ENCODE measurements at regions of chr3 and their contacts with region 1.

Region 1: GRCh38 chr3:69865920-69866679 is 126.8 kb downstream of the MITF start:
- DNase-seq: peak in 1 of 2 donors; percentile 51
- ATAC-seq: peak; percentile 71
- H3K4me3 ChIP-seq: peak overlapping the region; percentile 21 to 59
- H3K27ac ChIP-seq: no peak overlapping the region
- H3K4me1 ChIP-seq: no peaks in the 10 kb centered on the region
- H3K27me3 ChIP-seq: no peaks in the 10 kb centered on the region

Region 2: DNA sequence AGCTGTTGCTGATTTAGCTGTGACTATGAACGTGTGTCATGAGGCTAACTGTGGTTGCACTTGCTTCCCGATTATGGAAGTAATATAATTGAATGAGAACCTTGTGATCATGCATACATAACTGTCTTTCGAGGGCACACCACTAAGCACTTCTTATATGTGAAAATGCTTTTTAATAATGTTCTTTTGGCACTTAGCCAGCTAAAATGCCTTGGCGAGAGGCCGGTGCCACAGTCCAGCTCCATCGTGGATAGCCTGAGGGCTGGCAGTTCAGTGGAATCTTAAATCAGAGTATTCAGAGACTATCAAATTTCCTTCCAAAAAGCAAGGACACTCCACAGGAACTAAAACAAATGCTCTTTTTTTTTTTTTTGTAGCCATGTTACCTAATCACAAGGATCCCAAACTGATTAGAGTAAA is 318.6 kb before region 1 on chr3:
- intact Hi-C with region 1: no loop called
- DNase-seq: no peak
- ATAC-seq: no peak
- H3K4me3 ChIP-seq: no peak overlapping the region
- H3K27ac ChIP-seq: no peak overlapping the region
- H3K4me1 ChIP-seq: no peaks in the 10 kb centered on the region
- H3K27me3 ChIP-seq: peaks cover 0 to 2% of the 10 kb centered on the region in 2 donors

Region 3: DNA sequence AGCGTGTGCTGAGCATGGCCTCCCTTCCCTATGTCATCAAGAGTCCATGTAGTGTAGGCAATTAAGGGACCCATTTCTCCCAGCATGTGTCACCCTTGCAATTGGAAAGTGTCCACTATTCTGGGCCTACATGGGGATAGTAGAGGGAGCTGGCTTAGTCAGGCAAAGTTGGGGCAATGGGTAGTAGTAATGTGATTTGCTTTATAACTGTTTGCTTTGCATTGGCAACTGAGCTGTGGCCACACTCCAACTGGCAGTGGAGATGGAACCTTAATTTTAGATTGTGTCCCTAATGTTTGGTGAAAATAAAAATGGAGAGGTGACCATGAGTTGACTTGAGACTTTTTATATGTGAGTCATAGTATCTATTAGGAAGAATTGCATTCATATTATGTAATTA is 35.7 kb after region 1 on chr3:
- intact Hi-C with region 1: loop called in 1 of 2 experiments (anchors 5 kb)
- DNase-seq: peak; percentile 47 to 70
- ATAC-seq: peak; percentile 52
- H3K4me3 ChIP-seq: no peak overlapping the region
- H3K27ac ChIP-seq: no peak overlapping the region
- H3K4me1 ChIP-seq: peaks cover 0 to 1% of the 10 kb centered on the region in 2 donors
- H3K27me3 ChIP-seq: no peaks in the 10 kb centered on the region

Region 4: GRCh38 chr3:70072180-70072579 is 206.1 kb after region 1 on chr3:
- intact Hi-C with region 1: no loop called
- DNase-seq: no peak
- ATAC-seq: peak; percentile 33
- H3K4me3 ChIP-seq: peak overlapping the region; percentile 8 to 59
- H3K27ac ChIP-seq: peak overlapping the region; percentile 19 to 82
- H3K4me1 ChIP-seq: peaks cover 0 to 4% of the 10 kb centered on the region in 2 donors
- H3K27me3 ChIP-seq: no peaks in the 10 kb centered on the region

Measured in aorta (tissue), 5 donors.